OCI-LY7 (cell line): ENCODE measurements at regions of chr12 and their contacts with region 1.

Region 1: GRCh38 chr12:121793838-121794533 is 498 bp upstream of the RHOF start:
- DNase-seq: peak; percentile 96
- H3K4me3 ChIP-seq: peak overlapping the region; percentile 76
- H3K27ac ChIP-seq: peak overlapping the region; percentile 63
- H3K4me1 ChIP-seq: peaks cover 59% of the 10 kb centered on the region
- CTCF ChIP-seq: peak; percentile 99

Region 2: DNA sequence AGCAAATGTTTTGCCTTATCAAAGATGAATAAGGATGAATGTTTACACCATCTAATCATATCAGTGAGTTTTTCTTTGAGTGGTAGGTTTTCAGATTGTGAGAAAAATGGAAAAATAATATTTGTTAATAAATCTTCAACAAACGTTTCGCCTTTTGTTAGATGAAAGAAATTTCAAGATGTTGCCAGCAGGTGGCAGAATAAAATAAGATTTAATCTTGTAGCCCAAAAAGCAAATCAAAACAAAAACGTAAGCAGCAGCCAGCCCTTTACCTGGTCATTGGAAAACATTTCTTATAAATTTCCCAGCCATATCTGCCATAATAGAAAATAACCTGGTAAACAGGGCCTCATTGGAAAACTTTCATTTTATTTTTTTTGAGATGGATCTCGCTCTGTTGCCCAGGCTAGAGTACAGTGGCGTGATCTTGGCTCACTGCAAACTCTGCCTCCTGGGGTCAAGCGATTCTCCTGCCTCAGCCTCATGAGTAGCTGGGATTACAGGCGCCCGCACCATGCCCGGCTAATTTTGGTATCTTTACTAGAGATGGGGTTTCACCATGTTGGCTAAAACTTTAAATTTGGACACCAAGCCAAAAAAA is 96.8 kb before region 1 on chr12:
- CTCF ChIA-PET with region 1: interaction called, 4 read pairs
- POLR2A ChIA-PET with region 1: interaction called, 4 read pairs
- intact Hi-C with region 1: loop called (anchors 1 kb)
- DNase-seq: peak; percentile 77
- H3K4me3 ChIP-seq: no peak overlapping the region
- H3K27ac ChIP-seq: no peak overlapping the region
- H3K4me1 ChIP-seq: no peaks in the 10 kb centered on the region
- CTCF ChIP-seq: peak; percentile 90

Region 3: GRCh38 chr12:121773011-121773777 is 20.8 kb before region 1 on chr12:
- CTCF ChIA-PET with region 1: interaction called, 9 read pairs
- POLR2A ChIA-PET with region 1: interaction called, 9 read pairs
- intact Hi-C with region 1: loop called (anchors 1 kb)
- DNase-seq: peak; percentile 89
- H3K4me3 ChIP-seq: no peak overlapping the region
- H3K27ac ChIP-seq: no peak overlapping the region
- H3K4me1 ChIP-seq: peaks cover 29% of the 10 kb centered on the region
- CTCF ChIP-seq: peak; percentile 90

Region 4: DNA sequence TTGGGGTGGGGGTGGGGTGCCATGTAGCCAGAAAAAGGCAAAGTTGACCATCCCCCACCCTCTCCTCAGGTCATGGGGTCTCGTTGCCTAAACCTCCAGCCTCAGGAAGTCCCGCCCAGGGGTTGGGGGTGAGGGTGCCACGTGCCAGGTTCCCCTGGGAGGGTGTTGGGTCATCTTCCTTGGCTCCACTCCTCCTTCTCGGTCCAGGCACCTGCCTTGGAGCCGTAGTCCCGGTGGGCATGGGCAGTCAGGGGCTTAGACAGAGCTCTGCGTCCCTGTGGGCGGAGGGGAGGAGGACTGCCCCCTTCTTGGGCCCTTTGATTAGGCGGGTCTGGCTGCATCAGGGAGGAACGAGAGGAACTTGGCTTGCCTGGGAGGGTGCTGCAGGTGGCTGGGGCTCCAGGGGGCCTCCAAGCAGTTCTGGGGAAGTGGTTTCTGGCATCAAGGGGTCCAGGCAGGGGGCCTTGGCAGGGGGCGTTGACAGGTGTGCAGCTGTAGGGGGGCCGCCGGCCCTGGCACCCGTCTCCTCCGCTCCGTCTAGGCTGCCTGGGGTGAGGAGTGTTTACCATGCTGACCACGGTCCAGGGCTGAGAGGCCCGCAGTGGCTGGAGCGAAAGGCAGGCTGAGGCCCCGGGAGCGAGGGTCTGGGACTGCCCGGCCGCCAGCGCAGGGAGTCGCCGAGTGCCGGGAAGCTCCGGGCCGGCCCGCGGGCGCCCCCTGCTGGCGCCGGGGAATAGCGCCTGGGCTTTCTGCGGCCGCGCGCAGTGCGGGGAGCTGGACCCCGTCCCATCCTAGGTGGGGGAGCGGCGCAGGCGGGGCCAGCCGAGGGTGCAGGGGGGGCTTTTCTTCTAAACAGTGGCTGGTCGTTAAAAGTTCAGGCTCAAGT is 17.7 kb after region 1 on chr12:
- CTCF ChIA-PET with region 1: interaction called, 13 read pairs
- POLR2A ChIA-PET with region 1: interaction called, 10 read pairs
- intact Hi-C with region 1: loop called (anchors 1 kb)
- DNase-seq: peak; percentile 70
- H3K4me3 ChIP-seq: peak overlapping the region; percentile 72
- H3K27ac ChIP-seq: peak overlapping the region; percentile 62
- H3K4me1 ChIP-seq: peaks cover 45% of the 10 kb centered on the region
- CTCF ChIP-seq: peak; percentile 96

Region 5: GRCh38 chr12:121894633-121895032 is 100.6 kb after region 1 on chr12:
- CTCF ChIA-PET with region 1: interaction called, 6 read pairs
- POLR2A ChIA-PET with region 1: interaction called, 5 read pairs
- intact Hi-C with region 1: loop called (anchors 1 kb)
- DNase-seq: peak; percentile 72
- H3K4me3 ChIP-seq: peak overlapping the region; percentile 28
- H3K27ac ChIP-seq: peak overlapping the region; percentile 79
- H3K4me1 ChIP-seq: peaks cover 39% of the 10 kb centered on the region
- CTCF ChIP-seq: peak; percentile 78

Region 6: DNA sequence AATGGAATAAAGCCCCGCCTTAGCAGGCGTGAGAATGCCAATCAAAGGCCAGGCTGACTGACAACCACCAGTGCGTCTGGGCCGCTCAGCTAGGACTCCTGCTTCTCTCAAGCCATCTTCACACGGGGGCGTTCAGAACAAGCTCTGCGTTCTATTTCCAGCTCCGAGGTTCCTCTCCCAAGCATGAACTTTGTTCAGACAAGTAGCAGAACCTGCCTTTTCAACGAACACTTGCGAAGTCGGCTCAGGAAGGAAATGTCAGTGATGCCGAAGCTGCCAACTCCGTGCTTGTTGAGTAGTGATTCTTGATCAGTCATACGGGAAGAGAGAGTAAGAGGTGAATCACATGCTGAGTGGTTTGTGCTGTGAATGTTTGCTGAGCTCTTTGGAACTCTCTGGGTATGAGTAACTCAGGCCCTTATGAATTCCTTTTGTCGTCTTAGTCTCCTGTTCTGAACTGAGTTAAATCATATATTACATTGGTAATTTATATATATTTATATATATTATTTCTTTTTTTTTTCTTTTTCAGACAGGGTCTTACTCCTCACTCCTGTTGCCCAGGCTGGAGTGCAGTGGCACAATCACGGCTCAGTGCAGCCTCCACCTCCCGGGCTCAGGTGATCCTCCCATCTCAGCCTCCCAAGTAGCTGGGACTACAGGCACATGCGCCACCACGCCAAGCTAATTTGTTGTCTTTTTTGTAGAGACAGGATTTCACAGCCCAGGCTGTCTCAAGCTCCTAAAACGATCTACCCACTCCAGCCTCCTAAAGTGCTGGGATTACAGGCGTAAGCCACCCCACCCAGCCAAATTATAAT is 198.3 kb after region 1 on chr12:
- CTCF ChIA-PET with region 1: no interaction called
- POLR2A ChIA-PET with region 1: no interaction called
- intact Hi-C with region 1: no loop called
- DNase-seq: no peak
- H3K4me3 ChIP-seq: no peak overlapping the region
- H3K27ac ChIP-seq: peak overlapping the region; percentile 56
- H3K4me1 ChIP-seq: peaks cover 62% of the 10 kb centered on the region
- CTCF ChIP-seq: no peak